ENCODE measurements at regions of chr11 and their contacts with region 1.

Region 1: DNA sequence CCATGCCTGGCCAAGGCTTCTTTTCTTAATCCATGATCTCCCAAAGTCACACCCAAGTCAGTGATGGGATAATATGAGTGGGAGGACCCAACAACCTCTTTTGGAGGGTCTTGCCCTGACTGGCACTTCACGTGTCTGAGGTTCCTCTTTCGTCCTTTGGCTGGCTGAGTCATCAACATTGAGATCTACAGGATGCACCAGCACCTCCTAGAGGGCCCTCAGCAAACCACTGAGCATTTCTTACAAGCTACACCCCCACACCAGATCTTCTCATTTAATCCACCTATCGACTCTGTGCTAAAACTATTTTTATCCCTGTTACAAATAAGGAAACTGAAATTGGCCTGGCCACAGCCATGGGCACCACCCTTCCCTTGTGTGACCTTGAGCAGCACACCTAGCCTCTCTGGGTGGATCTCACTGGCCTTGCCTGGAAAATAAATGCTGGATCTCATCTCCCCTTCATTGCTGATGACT is 63.4 kb downstream of the FLI1 start:
- DNase-seq: peak; percentile 84
- ATAC-seq: peak; percentile 91
- H3K4me3 Mint-ChIP-seq: no peak overlapping the region
- H3K27ac Mint-ChIP-seq: peak overlapping the region; percentile 87
- H3K4me1 Mint-ChIP-seq: peaks cover 76% of the 10 kb centered on the region
- H3K27me3 Mint-ChIP-seq: no peaks in the 10 kb centered on the region

Region 2: GRCh38 chr11:128172046-128172878 is 585.0 kb before region 1 on chr11:
- CTCF ChIA-PET with region 1: interaction called, 18 read pairs
- POLR2A ChIA-PET with region 1: no interaction called
- DNase-seq: peak; percentile 91
- ATAC-seq: peak; percentile 86
- H3K4me3 Mint-ChIP-seq: no peak overlapping the region
- H3K27ac Mint-ChIP-seq: no peak overlapping the region
- H3K4me1 Mint-ChIP-seq: no peaks in the 10 kb centered on the region
- H3K27me3 Mint-ChIP-seq: peaks cover 11% of the 10 kb centered on the region

Region 3: DNA sequence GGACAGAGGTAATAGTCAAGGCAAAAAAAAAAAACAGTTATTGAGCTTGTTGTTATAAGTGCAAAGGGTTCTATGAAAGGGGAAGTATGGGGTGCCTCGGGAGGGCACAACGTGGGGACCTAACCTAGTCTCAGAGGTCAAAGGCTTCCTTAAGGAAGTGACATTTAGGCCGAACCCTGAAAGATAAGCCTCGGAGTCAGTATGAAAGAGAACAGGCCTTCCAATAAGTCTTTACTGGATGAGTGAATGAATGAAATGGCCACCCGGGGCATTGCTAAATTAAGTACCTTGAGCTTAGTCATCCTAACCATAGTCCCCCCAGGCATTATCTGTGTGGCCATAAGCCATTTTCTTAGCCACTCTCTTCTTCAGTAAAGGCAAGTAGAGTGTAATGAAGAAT is 43.7 kb before region 1 on chr11:
- CTCF ChIA-PET with region 1: interaction called, 20 read pairs
- POLR2A ChIA-PET with region 1: no interaction called
- DNase-seq: no peak
- ATAC-seq: no peak
- H3K4me3 Mint-ChIP-seq: no peak overlapping the region
- H3K27ac Mint-ChIP-seq: peak overlapping the region; percentile 69
- H3K4me1 Mint-ChIP-seq: peaks cover 81% of the 10 kb centered on the region
- H3K27me3 Mint-ChIP-seq: no peaks in the 10 kb centered on the region

Region 4: DNA sequence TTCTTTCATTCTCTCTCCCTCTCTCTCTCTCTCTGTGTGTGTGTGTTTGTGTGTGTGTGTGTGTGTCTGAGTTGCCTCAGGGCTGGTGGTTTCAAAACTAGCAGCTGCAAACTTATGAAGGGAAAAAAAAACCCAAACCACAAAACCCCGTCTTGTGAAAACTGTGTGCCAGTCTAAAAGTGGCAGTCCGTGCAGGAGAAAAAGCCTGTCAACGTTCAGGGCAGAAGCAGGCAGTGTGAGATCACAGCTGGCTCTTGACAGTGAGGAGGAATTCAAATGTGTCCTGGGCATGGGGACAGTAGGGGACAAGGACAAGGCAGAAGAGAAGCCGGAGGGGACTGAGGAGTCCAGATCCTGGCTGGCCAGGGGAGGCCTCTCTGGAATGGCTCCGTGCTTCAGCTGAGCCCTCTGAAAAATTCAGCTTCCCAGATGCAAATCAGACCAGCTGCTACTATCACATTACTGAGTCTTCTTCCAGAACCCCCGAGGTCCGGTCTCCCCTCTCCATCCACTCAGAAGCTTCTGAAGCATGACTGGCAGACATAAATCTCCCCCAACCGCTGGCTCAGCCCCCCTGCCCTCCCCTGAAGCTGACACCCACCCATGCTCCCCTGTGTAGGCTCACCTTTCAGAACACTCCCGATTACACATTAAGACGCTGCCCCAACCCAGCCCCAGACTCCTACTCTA is 31.5 kb before region 1 on chr11:
- CTCF ChIA-PET with region 1: interaction called, 13 read pairs
- POLR2A ChIA-PET with region 1: no interaction called
- DNase-seq: peak; percentile 78
- ATAC-seq: peak; percentile 47
- H3K4me3 Mint-ChIP-seq: peak overlapping the region; percentile 66
- H3K27ac Mint-ChIP-seq: peak overlapping the region; percentile 91
- H3K4me1 Mint-ChIP-seq: peaks cover 99% of the 10 kb centered on the region
- H3K27me3 Mint-ChIP-seq: no peaks in the 10 kb centered on the region

Region 5: GRCh38 chr11:128745311-128746136 is 11.7 kb before region 1 on chr11:
- CTCF ChIA-PET with region 1: interaction called, 17 read pairs
- POLR2A ChIA-PET with region 1: interaction called, 3 read pairs
- DNase-seq: peak; percentile 42
- ATAC-seq: peak; percentile 20
- H3K4me3 Mint-ChIP-seq: peak overlapping the region; percentile 13
- H3K27ac Mint-ChIP-seq: peak overlapping the region; percentile 81
- H3K4me1 Mint-ChIP-seq: peaks cover 65% of the 10 kb centered on the region
- H3K27me3 Mint-ChIP-seq: no peaks in the 10 kb centered on the region

Region 6: DNA sequence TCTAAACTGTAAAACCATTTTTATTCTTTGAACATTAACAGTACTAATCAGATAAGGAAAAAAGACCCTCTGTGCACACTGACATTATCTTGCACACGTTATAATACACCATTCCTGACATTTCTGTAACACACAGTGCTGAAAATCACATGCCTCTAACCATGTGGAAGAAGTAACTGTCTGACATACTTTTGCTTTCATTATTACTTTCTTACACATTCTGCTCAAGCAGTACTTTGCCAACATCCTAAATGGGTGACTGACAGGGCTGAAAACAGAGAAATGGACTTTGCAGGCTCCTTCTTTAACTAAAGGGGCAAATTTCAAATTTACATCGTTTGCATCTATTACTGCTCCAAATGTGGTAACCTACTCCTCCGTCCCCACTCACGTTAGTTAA is 208.2 kb after region 1 on chr11:
- CTCF ChIA-PET with region 1: no interaction called
- POLR2A ChIA-PET with region 1: no interaction called
- DNase-seq: no peak
- ATAC-seq: peak; percentile 85
- H3K4me3 Mint-ChIP-seq: peak overlapping the region; percentile 24
- H3K27ac Mint-ChIP-seq: peak overlapping the region; percentile 43
- H3K4me1 Mint-ChIP-seq: peaks cover 42% of the 10 kb centered on the region
- H3K27me3 Mint-ChIP-seq: peaks cover 3% of the 10 kb centered on the region

Measured in activated CD8-positive, alpha-beta T cell treated with anti-CD3 and anti-CD28 coated beads, Interleukin-2, amount 10 ng/mL, durations not matched to agents 7 days and 5 days (primary cell).